ENCODE measurements at regions of chr9 and their contacts with region 1.

Region 1: GRCh38 chr9:1267141-1267570 is 217.0 kb downstream of the DMRT2 start:
- DNase-seq: peak; percentile 55
- ATAC-seq: peak; percentile 85
- H3K4me3 ChIP-seq: no peak overlapping the region
- H3K27ac ChIP-seq: no peak overlapping the region
- H3K4me1 ChIP-seq: no peaks in the 10 kb centered on the region; the same call in 1 of the 2 replicates
- H3K27me3 ChIP-seq: no peaks in the 10 kb centered on the region
- CTCF ChIP-seq: no peak
- EP300 ChIP-seq: peak; percentile 66 to 79; a peak in 3 of 4 replicates
- POLR2A ChIP-seq: no peak
- RAD21 ChIP-seq: no peak

Region 2: DNA sequence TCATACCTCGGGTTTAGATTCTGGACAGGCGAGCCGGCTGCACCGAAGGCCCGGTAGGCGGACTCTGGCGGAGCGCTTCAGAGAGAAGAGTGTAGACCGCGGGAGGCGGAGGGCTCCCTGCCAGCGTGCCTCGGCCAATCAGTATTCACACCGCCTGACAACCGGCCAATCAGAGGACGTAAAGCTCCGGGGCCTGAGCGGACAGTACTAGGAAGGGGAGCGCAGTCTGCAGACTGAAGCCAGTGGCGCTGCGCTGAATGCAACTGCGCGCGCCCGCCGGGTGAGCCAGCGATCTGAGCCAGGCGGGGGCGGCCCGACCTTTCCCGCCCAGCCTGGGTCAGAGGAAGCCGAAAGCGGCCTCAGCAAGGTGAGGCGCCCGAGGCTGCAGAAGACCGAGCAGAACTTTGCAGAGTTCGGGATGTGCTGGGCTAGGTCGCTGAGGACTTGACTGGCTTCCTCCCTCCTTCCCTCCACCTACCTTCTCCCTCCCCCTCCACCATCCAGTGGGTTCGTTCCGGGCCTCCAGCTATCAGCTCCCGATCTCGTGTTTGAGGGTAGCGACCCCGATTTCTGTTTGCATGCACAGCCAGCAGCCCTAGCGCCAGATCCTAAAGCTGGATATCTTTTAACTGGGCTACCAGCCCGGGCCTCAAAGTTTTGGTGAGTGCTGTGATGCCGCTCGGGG is 216.9 kb before region 1 on chr9 and contains the start of gene DMRT2:
- CTCF ChIA-PET with region 1: interaction called, 4 read pairs
- POLR2A ChIA-PET with region 1: interaction called, 4 read pairs
- RAD21 ChIA-PET with region 1: interaction called, 15 read pairs
- SMC1A ChIA-PET with region 1: interaction called, 30 read pairs
- in situ Hi-C with region 1: no loop called
- intact Hi-C with region 1: no loop called
- DNase-seq: no peak
- ATAC-seq: peak; percentile 78
- H3K4me3 ChIP-seq: no peak within 1 kb of the TSS
- H3K27ac ChIP-seq: no peak within 1 kb of the TSS
- H3K4me1 ChIP-seq: no peaks in the 10 kb centered on the region
- H3K27me3 ChIP-seq: peaks cover 10 to 38% of the 10 kb centered on the region in 2 experiments
- CTCF ChIP-seq: no peak
- EP300 ChIP-seq: no peak
- POLR2A ChIP-seq: no peak
- RAD21 ChIP-seq: no peak
- polyA plus RNA-seq, gene DMRT2: 0.08 to 0.18 TPM

Region 3: DNA sequence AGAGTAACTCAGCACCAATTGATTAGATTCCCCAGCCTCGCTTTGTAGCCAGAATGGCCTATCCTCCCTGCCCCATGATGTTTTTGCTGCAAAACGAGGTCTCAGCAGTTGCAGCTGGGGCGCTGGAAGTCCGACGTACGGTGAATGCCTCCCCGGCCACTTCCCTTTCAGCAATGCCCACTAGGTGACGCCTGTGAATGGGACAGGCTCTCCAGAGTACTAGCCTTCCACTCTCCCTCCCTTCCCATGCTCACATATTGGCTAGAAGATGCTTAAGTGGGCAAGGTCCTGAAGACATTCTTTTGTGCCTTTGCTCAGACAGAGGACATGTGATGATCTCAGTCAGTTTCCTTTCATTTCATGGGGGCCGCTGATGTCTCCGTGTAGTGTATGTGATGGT is 166.2 kb before region 1 on chr9:
- CTCF ChIA-PET with region 1: interaction called, 8 read pairs
- POLR2A ChIA-PET with region 1: interaction called, 5 read pairs
- RAD21 ChIA-PET with region 1: interaction called, 27 read pairs
- SMC1A ChIA-PET with region 1: interaction called, 38 read pairs
- in situ Hi-C with region 1: no loop called
- intact Hi-C with region 1: loop called (anchors 5 kb)
- DNase-seq: no peak
- ATAC-seq: peak; percentile 59
- H3K4me3 ChIP-seq: no peak overlapping the region
- H3K27ac ChIP-seq: no peak overlapping the region
- H3K4me1 ChIP-seq: no peaks in the 10 kb centered on the region
- H3K27me3 ChIP-seq: no peaks in the 10 kb centered on the region
- CTCF ChIP-seq: peak; percentile 28 to 49 (median 36); a peak in 4 of 6 replicates
- EP300 ChIP-seq: no peak
- POLR2A ChIP-seq: no peak
- RAD21 ChIP-seq: peak; percentile 40; the same call in 1 of the 2 replicates

Region 4: DNA sequence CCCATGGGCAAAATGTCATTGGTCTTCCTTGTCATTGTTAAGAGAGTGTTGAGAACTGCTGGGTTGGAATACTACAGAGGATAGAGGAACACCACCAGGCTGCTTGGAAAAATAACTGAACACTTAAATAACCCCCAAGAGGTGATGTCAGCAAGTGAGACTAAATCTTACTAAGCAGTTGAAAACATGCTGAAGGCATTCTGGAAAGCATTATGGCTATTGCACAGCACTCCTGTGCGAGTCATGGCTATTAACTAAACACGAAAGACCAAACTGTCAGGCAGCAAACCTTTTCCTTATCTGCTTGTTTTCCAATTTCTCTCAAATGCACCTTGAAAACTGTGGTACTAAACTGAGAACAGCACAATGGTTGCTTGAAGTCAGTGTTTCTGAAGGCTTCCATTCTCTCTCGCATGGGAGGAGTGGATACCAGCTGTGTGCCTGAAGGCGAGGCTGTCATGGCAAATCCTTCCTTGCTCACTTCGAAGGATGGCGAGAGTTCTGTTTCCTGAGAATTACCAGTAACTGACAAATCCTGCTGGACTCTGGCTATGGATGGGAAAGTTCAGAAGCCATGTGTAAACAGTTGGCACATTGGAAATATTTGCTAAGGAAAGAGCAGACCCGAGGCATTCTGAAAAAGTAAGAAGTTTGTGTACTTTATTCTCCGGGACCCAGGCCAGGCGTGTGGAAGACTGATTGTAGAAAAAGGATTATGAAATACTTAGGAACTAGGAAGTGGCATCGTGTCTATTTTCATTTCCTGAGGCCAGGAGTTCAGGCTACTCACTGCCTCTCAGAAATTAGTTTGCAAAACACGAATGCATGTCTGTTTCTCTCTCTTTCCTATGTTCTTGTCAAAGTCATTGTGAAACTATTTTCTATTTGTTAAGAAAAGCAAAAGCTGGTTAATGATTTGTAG is 34.9 kb before region 1 on chr9:
- CTCF ChIA-PET with region 1: interaction called, 3 read pairs
- POLR2A ChIA-PET with region 1: interaction called, 3 read pairs
- RAD21 ChIA-PET with region 1: interaction called, 6 read pairs
- SMC1A ChIA-PET with region 1: interaction called, 48 read pairs
- in situ Hi-C with region 1: no loop called
- intact Hi-C with region 1: no loop called
- DNase-seq: no peak
- ATAC-seq: peak; percentile 86
- H3K4me3 ChIP-seq: no peak overlapping the region
- H3K27ac ChIP-seq: no peak overlapping the region
- H3K4me1 ChIP-seq: no peaks in the 10 kb centered on the region
- H3K27me3 ChIP-seq: no peaks in the 10 kb centered on the region
- CTCF ChIP-seq: no peak
- EP300 ChIP-seq: no peak
- POLR2A ChIP-seq: no peak
- RAD21 ChIP-seq: no peak

Region 5: GRCh38 chr9:1285514-1285913 is 18.4 kb after region 1 on chr9:
- CTCF ChIA-PET with region 1: no interaction called
- POLR2A ChIA-PET with region 1: interaction called, 5 read pairs
- RAD21 ChIA-PET with region 1: interaction called, 20 read pairs
- SMC1A ChIA-PET with region 1: interaction called, 60 read pairs
- in situ Hi-C with region 1: no loop called
- intact Hi-C with region 1: no loop called
- DNase-seq: no peak
- ATAC-seq: no peak
- H3K4me3 ChIP-seq: no peak overlapping the region
- H3K27ac ChIP-seq: no peak overlapping the region
- H3K4me1 ChIP-seq: no peaks in the 10 kb centered on the region
- H3K27me3 ChIP-seq: no peaks in the 10 kb centered on the region
- CTCF ChIP-seq: no peak
- EP300 ChIP-seq: no peak
- POLR2A ChIP-seq: no peak
- RAD21 ChIP-seq: no peak

Region 6: GRCh38 chr9:1400983-1401382 is 133.8 kb after region 1 on chr9:
- CTCF ChIA-PET with region 1: interaction called, 6 read pairs
- POLR2A ChIA-PET with region 1: no interaction called
- RAD21 ChIA-PET with region 1: interaction called, 11 read pairs
- SMC1A ChIA-PET with region 1: interaction called, 27 read pairs
- in situ Hi-C with region 1: no loop called
- intact Hi-C with region 1: no loop called
- DNase-seq: no peak
- ATAC-seq: peak; percentile 67
- H3K4me3 ChIP-seq: no peak overlapping the region
- H3K27ac ChIP-seq: no peak overlapping the region
- H3K4me1 ChIP-seq: no peaks in the 10 kb centered on the region
- H3K27me3 ChIP-seq: no peaks in the 10 kb centered on the region
- CTCF ChIP-seq: peak in 1 of 3 experiments; percentile 26; a peak in 2 of 6 replicates
- EP300 ChIP-seq: no peak
- POLR2A ChIP-seq: no peak
- RAD21 ChIP-seq: no peak